Adrenal gland (tissue), 19 donors: ENCODE measurements at regions of chr14 and their contacts with region 1.

Region 1: DNA sequence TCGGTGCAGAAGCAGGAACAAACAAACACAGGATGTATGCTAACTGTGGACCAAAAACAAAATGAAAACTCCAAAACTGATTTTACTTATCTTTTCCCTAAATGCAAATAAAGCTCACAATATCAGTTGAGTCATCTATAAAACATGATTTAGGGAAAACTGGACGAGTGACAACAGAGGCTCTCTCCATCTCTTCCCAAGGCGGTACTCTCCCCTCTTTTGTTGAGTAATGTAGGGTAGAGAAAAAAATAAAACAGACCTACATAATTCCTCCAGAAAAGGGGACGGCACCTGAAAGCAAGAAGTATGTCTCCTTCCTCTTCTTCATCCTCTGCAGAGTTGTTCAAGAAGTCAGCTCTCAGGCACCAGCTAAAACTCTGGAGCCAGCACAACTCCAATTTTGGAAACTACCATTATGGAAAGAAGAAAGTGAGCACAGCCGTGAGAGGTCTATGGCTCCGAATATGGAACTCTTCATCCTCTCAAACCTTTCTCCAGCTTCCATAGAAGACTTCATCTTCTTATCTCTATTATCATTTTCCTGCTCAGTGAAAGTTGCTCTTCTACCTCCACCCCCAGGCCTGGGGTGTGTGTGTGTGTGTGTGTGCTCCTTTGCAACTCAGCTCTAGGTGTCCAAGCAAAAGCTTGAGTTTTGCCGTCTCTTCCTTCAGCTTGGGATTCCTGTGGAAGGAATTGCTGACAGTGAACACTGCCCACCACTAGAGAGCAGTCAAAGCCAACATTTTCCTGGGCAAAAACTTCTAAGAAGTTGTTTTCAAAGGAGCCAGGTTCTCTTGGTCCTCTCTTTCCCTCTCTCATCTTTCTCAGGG is 155.4 kb downstream of the DIO2 start:
- DNase-seq: peak; percentile 12 to 64 (median 41)
- H3K4me3 ChIP-seq: no peak overlapping the region
- H3K27ac ChIP-seq: no peak overlapping the region
- H3K4me1 ChIP-seq: peaks cover 0 to 6% of the 10 kb centered on the region in 2 donors
- H3K27me3 ChIP-seq: no peaks in the 10 kb centered on the region
- CTCF ChIP-seq: peak; percentile 43 to 77 (median 66)
- POLR2A ChIP-seq: no peak

Region 2: GRCh38 chr14:79668951-79669350 is 386.9 kb before region 1 on chr14:
- intact Hi-C with region 1: no loop called
- DNase-seq: no peak
- H3K4me3 ChIP-seq: no peak overlapping the region
- H3K27ac ChIP-seq: no peak overlapping the region
- H3K4me1 ChIP-seq: no peaks in the 10 kb centered on the region
- H3K27me3 ChIP-seq: no peaks in the 10 kb centered on the region
- CTCF ChIP-seq: no peak
- POLR2A ChIP-seq: no peak

Region 3: GRCh38 chr14:79947440-79948054 is 108.3 kb before region 1 on chr14:
- intact Hi-C with region 1: no loop called
- DNase-seq: no peak
- H3K4me3 ChIP-seq: no peak overlapping the region
- H3K27ac ChIP-seq: no peak overlapping the region
- H3K4me1 ChIP-seq: no peaks in the 10 kb centered on the region
- H3K27me3 ChIP-seq: no peaks in the 10 kb centered on the region
- CTCF ChIP-seq: no peak
- POLR2A ChIP-seq: no peak

Region 4: DNA sequence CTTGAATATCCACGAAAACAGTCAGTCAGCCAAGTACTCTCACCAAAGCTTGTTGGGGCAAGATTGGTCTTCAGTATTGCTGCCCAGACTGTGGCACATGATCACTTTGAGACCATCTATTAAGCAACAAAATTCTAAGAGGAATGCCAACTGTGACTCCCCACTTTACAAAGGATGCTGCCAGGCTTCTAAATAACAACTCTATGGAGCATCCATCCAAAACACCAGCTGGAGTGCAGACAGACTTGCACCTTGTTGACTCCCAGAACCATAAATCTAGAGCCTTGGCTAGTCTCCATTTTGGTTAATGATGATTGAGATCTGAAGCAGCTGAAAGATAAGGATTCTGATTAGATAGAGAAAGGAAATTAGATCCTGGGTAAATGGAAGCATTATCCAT is 22.6 kb after region 1 on chr14:
- intact Hi-C with region 1: no loop called
- DNase-seq: no peak
- H3K4me3 ChIP-seq: no peak overlapping the region
- H3K27ac ChIP-seq: no peak overlapping the region
- H3K4me1 ChIP-seq: no peaks in the 10 kb centered on the region
- H3K27me3 ChIP-seq: no peaks in the 10 kb centered on the region
- CTCF ChIP-seq: no peak
- POLR2A ChIP-seq: no peak

Region 5: GRCh38 chr14:80419345-80419744 is 363.5 kb after region 1 on chr14:
- intact Hi-C with region 1: no loop called
- DNase-seq: no peak
- H3K4me3 ChIP-seq: no peak overlapping the region
- H3K27ac ChIP-seq: no peak overlapping the region
- H3K4me1 ChIP-seq: no peaks in the 10 kb centered on the region
- H3K27me3 ChIP-seq: no peaks in the 10 kb centered on the region
- CTCF ChIP-seq: no peak
- POLR2A ChIP-seq: no peak

Region 6: GRCh38 chr14:80587075-80587724 is 531.3 kb after region 1 on chr14:
- intact Hi-C with region 1: loop called in 1 of 2 experiments (anchors 5 kb)
- DNase-seq: no peak
- H3K4me3 ChIP-seq: no peak overlapping the region
- H3K27ac ChIP-seq: no peak overlapping the region
- H3K4me1 ChIP-seq: peaks cover 0 to 11% of the 10 kb centered on the region in 2 donors
- H3K27me3 ChIP-seq: no peaks in the 10 kb centered on the region
- CTCF ChIP-seq: peak in 5 of 6 experiments; percentile 24 to 53 (median 38)
- POLR2A ChIP-seq: no peak

Region 7: DNA sequence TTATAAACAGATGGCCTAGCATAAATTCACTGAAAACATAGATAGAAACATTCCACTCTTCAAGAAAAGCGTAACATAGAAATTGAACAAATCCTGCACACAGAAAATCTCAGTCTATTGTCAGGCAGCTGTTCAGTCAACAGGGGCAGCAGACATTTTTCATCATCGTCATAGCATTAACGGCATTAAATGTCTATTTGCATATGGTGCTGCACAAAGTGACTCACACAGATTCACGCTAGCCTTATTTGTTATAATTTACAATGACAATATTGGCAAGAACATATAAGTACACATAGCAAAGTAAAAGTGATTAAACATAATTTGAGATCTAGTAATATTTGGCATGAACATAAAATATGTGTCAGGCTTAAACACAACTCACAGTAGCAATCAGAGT is 790.0 kb after region 1 on chr14:
- intact Hi-C with region 1: loop called in 1 of 2 experiments (anchors 10 kb)
- DNase-seq: no peak
- H3K4me3 ChIP-seq: no peak overlapping the region
- H3K27ac ChIP-seq: no peak overlapping the region
- H3K4me1 ChIP-seq: no peaks in the 10 kb centered on the region
- H3K27me3 ChIP-seq: no peaks in the 10 kb centered on the region
- CTCF ChIP-seq: no peak
- POLR2A ChIP-seq: no peak